ENCODE measurements at regions of chr5 and their contacts with region 1.

Region 1: DNA sequence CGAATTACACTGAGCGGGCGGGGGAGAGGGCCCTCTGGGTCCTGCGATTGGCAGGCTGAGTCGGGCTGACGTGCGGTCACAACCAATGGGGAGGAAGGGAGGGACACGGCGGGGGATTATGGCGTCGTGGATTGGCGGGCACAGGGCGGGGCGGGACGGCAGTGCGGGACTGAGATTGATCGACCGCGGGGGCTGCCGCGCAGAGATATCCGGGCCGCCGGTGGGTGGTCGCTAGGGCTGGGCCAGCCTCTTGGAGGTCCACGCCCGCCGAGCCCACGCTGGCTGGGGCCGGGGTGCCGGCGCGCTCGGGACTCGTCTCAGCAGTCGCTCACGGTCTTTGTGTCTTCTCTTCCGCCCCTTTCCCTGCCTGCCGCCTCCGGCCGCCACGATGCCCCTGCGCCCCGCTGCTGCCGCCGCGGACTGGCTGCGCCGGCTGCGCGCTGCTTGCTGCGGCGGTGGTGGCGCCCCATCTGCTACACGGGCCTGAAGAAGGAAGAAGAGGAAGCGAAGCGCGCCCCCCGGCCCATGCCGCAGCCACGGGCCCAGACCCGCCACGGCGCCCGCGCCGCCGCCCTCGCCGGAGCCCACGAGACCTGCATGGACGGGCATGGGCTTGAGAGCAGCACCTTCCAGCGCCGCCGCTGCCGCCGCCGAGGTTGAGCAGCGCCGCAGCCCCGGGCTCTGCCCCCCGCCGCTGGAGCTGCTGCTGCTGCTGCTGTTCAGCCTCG is at the start of gene RGMB:
- DNase-seq: peak; percentile 95 to 99 (median 98)
- H3K4me3 ChIP-seq: peak within 1 kb of the TSS; percentile 56 to 98 (median 86)
- H3K27ac ChIP-seq: peak within 1 kb of the TSS in 58 of 59 donors; percentile 39 to 95 (median 86)
- H3K27me3 ChIP-seq: no peaks in the 10 kb centered on the region
- CTCF ChIP-seq: peak in 26 of 56 donors; percentile 2 to 55 (median 21)
- total RNA-seq, gene RGMB: 20.2 to 59.3 (median 41.0) TPM

Region 2: GRCh38 chr5:96934708-96935558 is 1838.7 kb before region 1 on chr5:
- intact Hi-C with region 1: loop called in 1 of 2 experiments (anchors 5 kb)
- DNase-seq: peak; percentile 82 to 96 (median 92)
- H3K4me3 ChIP-seq: peak overlapping the region; percentile 63 to 96 (median 86)
- H3K27ac ChIP-seq: peak overlapping the region; percentile 95 to 100 (median 99)
- H3K27me3 ChIP-seq: no peaks in the 10 kb centered on the region
- CTCF ChIP-seq: peak in 18 of 56 donors; percentile 3 to 40 (median 17)

Region 3: DNA sequence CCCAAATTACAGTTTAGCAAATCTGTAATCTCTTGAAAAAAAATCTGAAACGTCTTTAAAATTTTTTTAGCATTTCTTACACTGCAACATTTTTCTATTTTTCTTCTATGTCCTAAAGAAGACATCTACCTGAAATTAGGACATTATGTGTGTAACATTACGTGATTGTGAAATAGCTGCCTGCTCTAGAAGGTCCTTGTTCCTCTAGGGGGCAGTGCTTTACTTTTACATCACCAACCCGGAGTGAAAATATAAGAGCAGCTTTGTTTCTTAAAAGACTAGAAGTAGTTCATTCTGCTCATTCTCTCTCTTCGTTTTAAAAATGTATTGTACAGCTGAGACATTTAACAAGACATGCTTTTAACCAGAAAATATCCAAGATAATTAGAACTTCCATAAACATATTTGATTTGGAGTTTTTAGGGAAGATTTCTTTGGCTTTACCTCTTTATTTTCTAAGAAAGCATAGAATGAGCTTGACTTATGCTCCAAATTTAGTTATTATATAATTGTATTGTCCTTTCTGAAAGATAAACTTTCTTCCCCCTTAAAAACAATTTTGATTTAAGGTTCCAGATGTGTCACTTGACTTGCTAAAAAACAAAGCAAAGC is 1542.5 kb before region 1 on chr5:
- intact Hi-C with region 1: loop called (anchors 5 to 10 kb)
- DNase-seq: peak in 4 of 10 donors; percentile 6 to 45 (median 24)
- H3K4me3 ChIP-seq: peak overlapping the region in 10 of 59 donors; percentile 0 to 33 (median 18)
- H3K27ac ChIP-seq: no peak overlapping the region
- H3K27me3 ChIP-seq: no peaks in the 10 kb centered on the region
- CTCF ChIP-seq: peak; percentile 68 to 95 (median 82)

Region 4: GRCh38 chr5:97877588-97877987 is 896.0 kb before region 1 on chr5:
- intact Hi-C with region 1: loop called (anchors 5 to 10 kb)
- DNase-seq: no peak
- H3K4me3 ChIP-seq: no peak overlapping the region
- H3K27ac ChIP-seq: no peak overlapping the region
- H3K27me3 ChIP-seq: no peaks in the 10 kb centered on the region
- CTCF ChIP-seq: peak in 49 of 56 donors; percentile 21 to 68 (median 41)

Region 5: GRCh38 chr5:98913911-98914310 is 140.3 kb after region 1 on chr5:
- intact Hi-C with region 1: no loop called
- DNase-seq: no peak
- H3K4me3 ChIP-seq: no peak overlapping the region
- H3K27ac ChIP-seq: no peak overlapping the region
- H3K27me3 ChIP-seq: no peaks in the 10 kb centered on the region
- CTCF ChIP-seq: no peak

Region 6: DNA sequence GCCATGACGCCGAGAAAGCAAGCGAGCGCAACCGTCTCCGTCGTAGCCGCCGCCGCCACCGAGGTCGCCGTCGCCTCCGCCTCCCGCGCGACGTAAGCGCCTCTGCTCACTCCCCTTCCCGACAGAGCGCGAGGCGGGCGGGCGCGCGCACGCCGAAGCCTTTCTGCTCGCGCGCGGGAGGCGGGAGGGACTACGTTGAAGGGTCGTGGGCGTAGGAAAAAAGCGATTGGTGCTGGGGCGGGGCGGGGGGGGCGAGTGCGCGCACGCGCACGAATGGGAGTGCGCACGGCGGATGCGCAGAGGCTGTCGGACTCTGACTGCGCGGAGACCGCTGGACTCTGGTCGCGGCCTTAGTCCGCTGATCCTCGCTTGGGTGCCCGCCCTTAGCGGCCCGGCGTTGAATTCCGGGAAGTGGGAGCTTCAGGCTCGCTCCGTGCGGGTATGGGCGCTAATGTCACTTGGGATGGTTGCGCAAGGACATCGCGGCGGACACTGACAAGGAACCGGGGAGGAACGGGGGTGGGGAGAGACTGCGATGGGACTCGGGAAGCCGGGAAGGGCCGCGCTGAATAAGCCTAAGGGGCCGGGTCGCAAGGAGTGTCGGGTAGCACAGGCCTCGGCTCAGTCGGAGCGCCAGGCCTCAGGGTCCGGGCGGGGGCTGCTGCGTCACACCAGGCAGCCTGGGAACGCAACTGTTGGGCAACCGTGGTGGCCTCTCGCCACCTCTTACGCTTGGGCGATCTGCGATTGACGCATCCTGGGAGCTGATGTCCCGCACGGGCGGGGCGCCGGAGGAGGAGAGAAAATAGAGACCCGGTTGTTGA is 155.5 kb after region 1 on chr5 and contains the start of gene CHD1:
- intact Hi-C with region 1: loop called (anchors 5 kb)
- DNase-seq: peak; percentile 83 to 94 (median 92)
- H3K4me3 ChIP-seq: peak within 1 kb of the TSS; percentile 60 to 98 (median 88)
- H3K27ac ChIP-seq: peak within 1 kb of the TSS; percentile 87 to 100 (median 99)
- H3K27me3 ChIP-seq: no peaks in the 10 kb centered on the region
- CTCF ChIP-seq: peak in 11 of 56 donors; percentile 7 to 21 (median 14)
- total RNA-seq, gene CHD1: 19.6 to 53.4 (median 28.9) TPM

Measured in dorsolateral prefrontal cortex (tissue), 120 donors.